CD8-positive, alpha-beta memory T cell (primary cell): ENCODE measurements at regions of chr3 and their contacts with region 1.

Region 1: GRCh38 chr3:186540221-186540834 is 3.9 kb downstream of the CRYGS start:
- DNase-seq: peak; percentile 64 to 82 (median 74)
- H3K4me3 ChIP-seq: no peak overlapping the region
- H3K4me3 Mint-ChIP-seq: peak overlapping the region in 1 of 7 donors; percentile 5
- H3K27ac ChIP-seq: no peak overlapping the region
- H3K27ac Mint-ChIP-seq: peak overlapping the region in 4 of 8 donors; percentile 0 to 78 (median 42)
- H3K4me1 ChIP-seq: no peaks in the 10 kb centered on the region
- H3K4me1 Mint-ChIP-seq: peaks cover 8 to 19% (median 8%) of the 10 kb centered on the region in 3 donors
- H3K27me3 ChIP-seq: no peaks in the 10 kb centered on the region
- H3K27me3 Mint-ChIP-seq: no peaks in the 10 kb centered on the region

Region 2: DNA sequence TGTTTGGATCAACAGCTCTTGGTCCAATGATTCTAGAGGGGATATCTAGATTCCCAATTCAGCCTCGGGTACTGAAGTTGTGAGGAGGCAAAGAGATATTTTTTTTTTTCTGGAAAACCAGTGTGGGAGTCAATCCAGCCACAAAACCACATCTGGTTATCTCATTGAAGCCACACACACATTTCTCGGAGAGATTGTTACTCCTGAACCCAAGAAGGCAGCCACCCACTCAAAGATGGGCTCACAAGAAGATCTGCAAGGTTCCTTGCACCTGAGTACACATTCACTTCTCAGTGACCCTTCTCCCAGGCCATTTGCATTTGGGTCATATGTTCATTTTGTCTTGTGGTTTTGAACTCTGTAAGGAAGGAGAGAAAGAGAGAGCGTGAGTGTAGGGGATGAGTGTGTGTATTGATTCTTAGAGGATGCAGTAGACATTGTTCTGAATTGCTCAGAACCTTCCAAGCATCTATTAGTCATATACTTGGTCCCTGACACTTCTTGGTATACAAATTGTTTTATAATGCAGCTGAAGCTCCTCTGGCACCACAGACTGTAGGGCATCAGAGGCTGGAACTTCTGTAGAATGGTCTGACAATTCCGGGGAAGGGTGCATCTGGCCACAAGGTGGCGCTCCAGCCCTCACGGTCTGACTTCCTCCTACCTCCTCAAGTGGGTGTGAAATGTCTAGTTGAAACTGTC is 563.2 kb before region 1 on chr3:
- CTCF ChIA-PET with region 1: interaction called, 33 read pairs
- POLR2A ChIA-PET with region 1: interaction called, 4 read pairs
- DNase-seq: peak; percentile 55 to 82 (median 67)
- H3K4me3 ChIP-seq: no peak overlapping the region
- H3K4me3 Mint-ChIP-seq: no peak overlapping the region
- H3K27ac ChIP-seq: no peak overlapping the region
- H3K27ac Mint-ChIP-seq: no peak overlapping the region
- H3K4me1 ChIP-seq: peaks cover 5% of the 10 kb centered on the region
- H3K4me1 Mint-ChIP-seq: peaks cover 6 to 9% (median 9%) of the 10 kb centered on the region in 3 donors
- H3K27me3 ChIP-seq: no peaks in the 10 kb centered on the region
- H3K27me3 Mint-ChIP-seq: no peaks in the 10 kb centered on the region

Region 3: DNA sequence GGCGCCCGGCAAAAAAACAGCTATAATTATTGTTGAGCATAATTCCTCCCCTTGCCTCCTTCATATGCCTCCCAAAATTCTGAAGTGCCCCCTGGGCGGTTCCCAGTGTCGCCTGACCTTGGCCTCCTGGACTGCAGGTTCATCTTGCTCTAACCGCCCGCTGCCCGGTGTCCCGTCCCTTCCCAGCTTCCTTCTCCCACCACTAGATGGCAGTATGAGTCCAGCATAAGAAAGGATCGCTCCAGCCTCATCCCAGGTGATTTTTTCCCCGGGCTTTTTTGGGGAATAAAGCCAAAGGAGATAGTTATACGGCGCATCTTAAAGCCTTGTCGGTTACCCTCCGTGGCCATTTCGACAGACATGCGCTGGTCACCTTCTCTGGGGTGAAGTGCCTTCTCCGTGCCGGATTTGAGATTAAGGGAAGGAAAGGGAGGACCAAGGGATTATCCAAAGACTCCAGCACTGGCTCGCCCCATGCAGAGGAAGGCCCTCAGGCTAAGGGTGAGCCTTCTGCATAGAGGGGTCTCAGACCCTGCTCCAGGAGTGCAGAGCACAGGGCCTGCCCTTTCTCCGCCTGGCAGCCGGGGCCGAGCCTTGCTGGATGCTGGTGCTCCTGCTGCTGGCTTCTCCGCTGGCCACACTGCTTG is 556.7 kb before region 1 on chr3:
- CTCF ChIA-PET with region 1: interaction called, 33 read pairs
- POLR2A ChIA-PET with region 1: no interaction called
- DNase-seq: peak; percentile 32 to 67 (median 46)
- H3K4me3 ChIP-seq: no peak overlapping the region
- H3K4me3 Mint-ChIP-seq: no peak overlapping the region
- H3K27ac ChIP-seq: no peak overlapping the region
- H3K27ac Mint-ChIP-seq: no peak overlapping the region
- H3K4me1 ChIP-seq: peaks cover 7% of the 10 kb centered on the region
- H3K4me1 Mint-ChIP-seq: peaks cover 0 to 5% (median 4%) of the 10 kb centered on the region in 3 donors
- H3K27me3 ChIP-seq: no peaks in the 10 kb centered on the region
- H3K27me3 Mint-ChIP-seq: peaks cover 4 to 5% of the 10 kb centered on the region in 2 donors

Region 4: GRCh38 chr3:186259612-186260383 is 280.5 kb before region 1 on chr3:
- CTCF ChIA-PET with region 1: interaction called, 82 read pairs
- POLR2A ChIA-PET with region 1: no interaction called
- DNase-seq: peak; percentile 37 to 72 (median 50)
- H3K4me3 ChIP-seq: no peak overlapping the region
- H3K4me3 Mint-ChIP-seq: peak overlapping the region in 3 of 7 donors; percentile 30 to 56 (median 44)
- H3K27ac ChIP-seq: no peak overlapping the region
- H3K27ac Mint-ChIP-seq: peak overlapping the region in 4 of 8 donors; percentile 25 to 84 (median 56)
- H3K4me1 ChIP-seq: peaks cover 4% of the 10 kb centered on the region
- H3K4me1 Mint-ChIP-seq: peaks cover 8 to 13% (median 11%) of the 10 kb centered on the region in 3 donors
- H3K27me3 ChIP-seq: no peaks in the 10 kb centered on the region
- H3K27me3 Mint-ChIP-seq: peaks cover 2 to 4% of the 10 kb centered on the region in 2 donors

Region 5: GRCh38 chr3:186520957-186521842 is 19.1 kb before region 1 on chr3:
- CTCF ChIA-PET with region 1: interaction called, 17 read pairs
- POLR2A ChIA-PET with region 1: no interaction called
- DNase-seq: no peak
- H3K4me3 ChIP-seq: no peak overlapping the region
- H3K4me3 Mint-ChIP-seq: peak overlapping the region in 1 of 7 donors; percentile 2
- H3K27ac ChIP-seq: no peak overlapping the region
- H3K27ac Mint-ChIP-seq: peak overlapping the region in 5 of 8 donors; percentile 6 to 73 (median 48)
- H3K4me1 ChIP-seq: peaks cover 45% of the 10 kb centered on the region
- H3K4me1 Mint-ChIP-seq: peaks cover 51 to 58% (median 57%) of the 10 kb centered on the region in 3 donors
- H3K27me3 ChIP-seq: no peaks in the 10 kb centered on the region
- H3K27me3 Mint-ChIP-seq: no peaks in the 10 kb centered on the region